AG04450 (cell line): ENCODE measurements at regions of chr7 and their contacts with region 1.

Region 1: DNA sequence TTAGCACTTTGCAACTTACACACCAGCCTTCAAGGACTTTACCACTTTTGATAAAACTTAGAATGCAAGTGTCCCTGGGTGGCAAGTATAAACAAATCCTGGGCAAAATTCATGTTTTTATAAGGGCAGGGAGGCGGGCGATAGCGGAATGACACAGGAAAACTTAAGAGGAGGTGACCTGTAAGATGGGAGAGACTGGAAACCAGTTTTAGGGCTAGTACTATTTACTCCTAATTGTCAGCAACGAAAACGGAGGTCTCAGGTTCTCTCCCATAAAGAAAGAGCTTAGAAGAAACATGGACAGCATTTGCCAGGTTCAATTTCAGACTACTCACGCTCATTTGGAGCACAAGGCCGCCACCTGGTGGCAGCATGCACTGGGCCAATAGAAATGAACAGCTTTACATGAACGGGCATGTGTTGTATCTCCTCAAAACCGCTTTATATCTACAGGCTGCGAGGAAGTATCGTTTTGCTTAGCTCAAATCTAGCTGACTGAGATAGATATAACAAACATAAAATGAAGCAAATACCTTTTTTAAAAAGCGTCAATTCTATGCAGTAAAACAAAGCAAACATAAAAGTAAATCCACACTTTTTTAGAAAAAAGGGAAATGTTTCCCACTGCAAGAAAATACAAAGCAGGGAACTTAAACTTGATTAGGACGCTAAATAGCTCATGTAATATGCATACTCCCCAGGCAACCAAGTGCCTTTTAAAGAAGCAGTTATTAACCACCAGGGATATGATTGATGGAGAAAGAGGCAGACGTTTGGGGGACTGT is 37.6 kb upstream of the SVOPL start:
- DNase-seq: peak; percentile 76
- H3K4me3 ChIP-seq: no peak overlapping the region
- H3K27ac ChIP-seq: no peak overlapping the region
- H3K27me3 ChIP-seq: no peaks in the 10 kb centered on the region
- CTCF ChIP-seq: peak; percentile 96

Region 2: DNA sequence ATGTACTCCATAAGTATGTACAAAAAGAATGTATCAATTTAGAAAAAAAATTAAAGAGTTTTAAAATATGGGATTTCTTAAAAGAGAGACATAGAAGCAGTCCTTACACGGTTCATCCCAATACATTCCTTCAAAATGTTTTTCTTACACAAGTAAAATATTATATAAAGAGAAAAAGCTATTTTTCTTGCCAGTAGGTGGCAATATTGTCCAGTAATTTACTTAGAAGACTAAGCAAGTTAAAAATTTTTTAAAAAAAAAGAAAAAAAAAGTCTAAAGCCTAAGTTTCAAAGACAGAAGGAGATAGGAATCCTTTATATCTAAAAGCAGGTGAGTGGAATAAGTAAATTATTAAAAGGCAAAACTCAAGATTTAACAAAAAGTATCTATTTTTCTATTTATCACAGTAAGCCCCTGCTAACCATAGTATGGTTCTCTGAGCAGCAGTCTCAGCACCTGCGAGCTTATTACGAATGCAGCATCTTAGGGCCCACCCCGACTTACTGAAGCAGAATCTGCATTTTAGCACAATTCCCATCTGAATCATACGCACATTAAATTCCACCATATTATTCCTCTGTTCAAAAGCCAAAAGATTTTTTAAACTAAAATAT is 1132.6 kb before region 1 on chr7:
- CTCF ChIA-PET with region 1: interaction called, 13 read pairs
- POLR2A ChIA-PET with region 1: no interaction called
- DNase-seq: peak; percentile 13
- H3K4me3 ChIP-seq: no peak overlapping the region
- H3K27ac ChIP-seq: no peak overlapping the region
- H3K27me3 ChIP-seq: no peaks in the 10 kb centered on the region
- CTCF ChIP-seq: peak; percentile 45

Region 3: GRCh38 chr7:137898839-137899721 is 839.7 kb before region 1 on chr7:
- CTCF ChIA-PET with region 1: interaction called, 11 read pairs
- POLR2A ChIA-PET with region 1: no interaction called
- DNase-seq: peak; percentile 47
- H3K4me3 ChIP-seq: no peak overlapping the region
- H3K27ac ChIP-seq: peak overlapping the region; percentile 47
- H3K27me3 ChIP-seq: no peaks in the 10 kb centered on the region
- CTCF ChIP-seq: peak; percentile 98

Region 4: DNA sequence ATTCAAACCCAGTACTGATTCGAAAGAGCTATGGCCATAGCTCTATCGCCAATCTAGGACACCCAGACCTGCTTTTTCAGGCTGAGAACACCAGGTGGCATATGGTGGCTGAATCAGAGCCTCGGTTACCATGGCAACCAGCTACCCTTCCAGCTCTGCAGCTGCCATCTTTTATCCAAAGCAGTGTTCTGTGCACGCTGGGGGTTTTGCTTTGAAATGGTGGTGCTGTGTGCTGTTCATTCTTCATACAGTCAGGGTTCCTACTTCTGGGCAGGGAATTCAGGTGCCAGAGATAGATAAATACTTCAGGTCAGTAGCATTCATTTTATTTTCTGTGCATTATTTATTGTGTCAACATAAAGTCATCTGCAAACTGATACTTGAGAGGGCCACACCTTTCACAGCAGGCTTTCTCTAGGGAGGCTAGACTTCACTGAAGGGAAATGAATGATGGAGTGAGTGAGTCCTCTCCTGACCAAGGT is 577.1 kb before region 1 on chr7:
- CTCF ChIA-PET with region 1: interaction called, 209 read pairs
- POLR2A ChIA-PET with region 1: no interaction called
- DNase-seq: peak; percentile 65
- H3K4me3 ChIP-seq: no peak overlapping the region
- H3K27ac ChIP-seq: no peak overlapping the region
- H3K27me3 ChIP-seq: no peaks in the 10 kb centered on the region
- CTCF ChIP-seq: peak; percentile 69

Region 5: DNA sequence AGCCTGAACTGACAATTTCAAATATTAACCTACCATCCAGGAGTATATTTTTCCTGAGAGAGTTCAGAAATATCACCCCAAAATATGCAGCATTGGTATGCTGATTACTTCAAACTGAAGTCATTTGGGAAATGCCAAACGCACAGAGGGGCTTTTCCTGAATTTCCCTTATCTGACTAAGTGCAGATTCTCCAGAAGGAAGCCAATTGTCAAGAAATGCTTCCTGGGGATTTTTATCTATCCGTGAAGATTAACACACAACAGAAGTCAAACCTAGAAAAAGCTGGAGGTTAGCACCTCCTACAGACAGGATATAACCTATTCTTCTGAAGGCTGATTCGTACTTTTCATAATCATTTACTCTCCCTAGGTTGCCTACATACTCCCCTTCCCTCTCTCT is 571.5 kb before region 1 on chr7:
- CTCF ChIA-PET with region 1: interaction called, 209 read pairs
- POLR2A ChIA-PET with region 1: no interaction called
- DNase-seq: no peak
- H3K4me3 ChIP-seq: no peak overlapping the region
- H3K27ac ChIP-seq: no peak overlapping the region
- H3K27me3 ChIP-seq: no peaks in the 10 kb centered on the region
- CTCF ChIP-seq: no peak

Region 6: GRCh38 chr7:138491612-138492386 is 246.9 kb before region 1 on chr7:
- CTCF ChIA-PET with region 1: no interaction called
- POLR2A ChIA-PET with region 1: no interaction called
- DNase-seq: no peak
- H3K4me3 ChIP-seq: no peak overlapping the region
- H3K27ac ChIP-seq: no peak overlapping the region
- H3K27me3 ChIP-seq: no peaks in the 10 kb centered on the region
- CTCF ChIP-seq: no peak